ENCODE measurements at regions of chr5 and their contacts with region 1.

Region 1: GRCh38 chr5:86411596-86411995 is 206.1 kb upstream of the COX7C start:
- DNase-seq: no peak
- H3K4me3 Mint-ChIP-seq: no peak overlapping the region
- H3K27ac Mint-ChIP-seq: no peak overlapping the region
- H3K4me1 Mint-ChIP-seq: peaks cover 12% of the 10 kb centered on the region
- H3K27me3 Mint-ChIP-seq: no peaks in the 10 kb centered on the region
- CTCF ChIP-seq: no peak

Region 2: DNA sequence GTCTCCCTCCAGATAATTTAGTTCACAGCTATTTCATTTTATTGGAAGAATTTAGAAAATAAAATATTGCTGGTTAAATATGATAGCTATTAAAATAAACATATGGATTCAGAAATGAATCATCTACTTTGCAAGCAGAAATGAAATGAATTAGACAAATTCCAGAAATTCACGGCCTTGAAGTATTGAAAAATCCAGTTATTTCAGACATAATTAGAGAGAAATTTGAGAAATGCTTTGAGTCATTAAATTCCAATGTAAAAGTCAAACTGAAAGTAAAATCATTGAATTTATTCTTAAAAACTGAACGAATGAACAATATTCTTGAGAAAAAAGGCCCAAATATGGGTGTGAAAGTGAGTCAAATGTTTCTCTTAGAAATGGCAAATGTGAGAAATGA is 1394.3 kb before region 1 on chr5:
- CTCF ChIA-PET with region 1: no interaction called
- intact Hi-C with region 1: loop called (anchors 10 kb)
- DNase-seq: no peak
- H3K4me3 Mint-ChIP-seq: no peak overlapping the region
- H3K27ac Mint-ChIP-seq: no peak overlapping the region
- H3K4me1 Mint-ChIP-seq: no peaks in the 10 kb centered on the region
- H3K27me3 Mint-ChIP-seq: no peaks in the 10 kb centered on the region
- CTCF ChIP-seq: no peak